Prostate gland (tissue), 2 donors: ENCODE measurements at regions of chr13 and their contacts with region 1.

Region 1: GRCh38 chr13:95644601-95645052 is at the start of gene DZIP1:
- DNase-seq: peak; percentile 17
- H3K4me3 ChIP-seq: peak within 1 kb of the TSS; percentile 40 to 41
- H3K27ac ChIP-seq: peak within 1 kb of the TSS; percentile 55 to 67
- H3K4me1 ChIP-seq: no peaks in the 10 kb centered on the region
- H3K27me3 ChIP-seq: peaks cover 2% of the 10 kb centered on the region
- CTCF ChIP-seq: no peak
- POLR2A ChIP-seq: no peak
- total RNA-seq, gene DZIP1: 6.4 to 19.0 TPM

Region 2: DNA sequence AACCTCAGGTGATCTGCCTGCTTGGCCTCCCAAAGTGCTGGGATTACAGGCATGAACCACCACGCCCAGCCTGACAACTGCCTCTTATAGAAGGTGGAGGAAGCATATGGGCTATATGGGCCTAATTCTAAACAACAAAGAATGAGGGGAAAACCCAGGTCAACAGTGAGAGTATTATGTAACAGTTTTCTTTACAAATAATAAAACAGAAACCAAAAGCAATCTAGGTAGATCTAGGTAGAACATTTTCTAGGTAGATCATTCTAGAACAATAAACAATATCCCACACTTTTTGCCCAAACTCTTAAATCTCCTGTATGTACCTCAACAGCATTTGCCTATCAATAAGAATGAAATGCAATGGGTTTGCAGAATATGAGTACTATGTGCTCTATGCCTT is 610.7 kb before region 1 on chr13:
- intact Hi-C with region 1: no loop called
- DNase-seq: no peak
- H3K4me3 ChIP-seq: no peak overlapping the region
- H3K27ac ChIP-seq: no peak overlapping the region
- H3K4me1 ChIP-seq: no peaks in the 10 kb centered on the region
- H3K27me3 ChIP-seq: no peaks in the 10 kb centered on the region
- CTCF ChIP-seq: no peak
- POLR2A ChIP-seq: no peak

Region 3: GRCh38 chr13:95367309-95367843 is 277.3 kb before region 1 on chr13:
- intact Hi-C with region 1: no loop called
- DNase-seq: no peak
- H3K4me3 ChIP-seq: no peak overlapping the region
- H3K27ac ChIP-seq: no peak overlapping the region
- H3K4me1 ChIP-seq: no peaks in the 10 kb centered on the region
- H3K27me3 ChIP-seq: no peaks in the 10 kb centered on the region
- CTCF ChIP-seq: no peak
- POLR2A ChIP-seq: no peak

Region 4: GRCh38 chr13:95676762-95677563 is 32.3 kb after region 1 on chr13 and contains the start of gene DNAJC3:
- intact Hi-C with region 1: loop called (anchors 1 kb)
- DNase-seq: peak; percentile 99
- H3K4me3 ChIP-seq: peak within 1 kb of the TSS; percentile 62 to 89
- H3K27ac ChIP-seq: peak within 1 kb of the TSS; percentile 92 to 94
- H3K4me1 ChIP-seq: no peaks in the 10 kb centered on the region
- H3K27me3 ChIP-seq: no peaks in the 10 kb centered on the region
- CTCF ChIP-seq: no peak
- POLR2A ChIP-seq: peak; percentile 98
- total RNA-seq, gene DNAJC3: 44.7 to 106 TPM